ENCODE measurements at regions of chr3 and their contacts with region 1.

Region 1: DNA sequence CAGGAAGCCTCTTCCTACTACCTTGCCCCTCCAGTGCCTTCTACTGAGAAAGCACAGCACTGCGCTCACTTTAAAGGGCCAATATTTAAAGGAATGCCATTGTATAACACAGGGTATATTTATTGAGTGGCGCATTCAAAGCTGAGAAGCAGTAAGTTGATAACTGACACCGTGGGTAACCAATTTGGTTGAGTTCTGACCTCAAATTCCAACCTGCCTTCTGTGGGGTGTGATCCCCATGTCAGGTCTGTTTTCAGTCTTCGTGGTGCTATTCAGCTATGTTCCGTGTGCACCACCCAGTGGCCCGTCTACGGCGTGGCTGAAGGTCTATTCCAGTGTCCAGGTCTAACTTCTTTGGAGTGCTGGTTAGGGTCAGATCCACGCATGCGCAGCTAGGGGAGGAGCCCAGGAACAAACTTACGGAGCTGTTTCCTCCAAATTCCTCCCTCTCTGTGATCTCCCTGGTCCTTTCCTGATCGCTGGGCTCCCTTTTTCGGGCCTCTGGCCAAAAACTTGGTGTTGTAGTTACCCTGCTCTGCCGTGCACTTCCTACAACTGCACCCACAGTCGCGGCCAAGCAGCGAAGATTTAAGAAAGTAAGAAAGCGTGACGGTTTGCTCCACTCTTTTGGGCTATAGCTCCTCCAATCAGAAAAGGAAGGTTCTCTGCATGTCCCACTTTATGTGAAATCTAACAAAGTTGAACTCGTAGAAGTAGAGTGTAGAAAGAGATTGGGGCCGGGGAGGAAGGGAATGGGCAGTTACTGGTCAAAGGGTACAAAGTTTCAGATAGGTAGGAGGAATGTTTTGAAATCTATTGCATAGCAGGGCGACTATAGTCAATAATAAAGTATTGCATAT is 7.7 kb downstream of the LRRC2 start:
- DNase-seq: peak; percentile 88
- ATAC-seq: peak; percentile 83

Region 2: DNA sequence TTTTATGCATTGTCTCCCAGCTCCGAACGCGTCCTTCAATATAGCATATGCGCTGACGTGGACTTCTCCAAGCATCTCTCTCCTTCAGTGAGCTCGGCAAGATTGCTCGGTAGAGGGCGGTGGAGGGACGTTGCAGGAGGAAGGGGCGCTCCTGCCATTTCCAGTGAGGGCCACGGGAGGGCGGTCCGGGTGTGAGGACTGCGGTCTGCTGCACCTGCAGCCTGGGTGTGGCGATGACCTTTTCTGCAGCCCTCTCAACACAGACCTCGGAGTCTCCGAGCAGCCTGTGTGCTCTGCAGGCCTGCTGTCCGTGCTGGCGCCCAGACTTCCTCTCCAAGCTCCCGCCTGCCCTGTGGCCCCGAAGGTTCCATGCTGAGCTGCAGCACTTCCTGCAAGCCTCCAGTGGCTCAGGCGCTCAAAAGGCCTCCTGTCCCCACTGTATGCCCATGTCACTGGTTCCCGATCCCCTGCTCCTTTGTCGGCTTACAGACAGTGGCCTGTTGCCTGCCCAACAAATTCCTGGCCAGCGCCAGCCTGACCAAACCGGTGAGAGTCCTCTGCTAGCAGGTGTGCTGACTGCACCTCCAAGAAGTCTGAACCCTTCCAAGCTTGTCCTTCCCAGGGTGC is 69.6 kb before region 1 on chr3:
- intact Hi-C with region 1: loop called (anchors 5 kb)
- DNase-seq: peak; percentile 94
- ATAC-seq: peak; percentile 91

Region 3: GRCh38 chr3:46524008-46524407 is 34.4 kb before region 1 on chr3:
- intact Hi-C with region 1: no loop called
- DNase-seq: no peak
- ATAC-seq: no peak

Region 4: GRCh38 chr3:46882377-46883053 is 324.1 kb after region 1 on chr3:
- intact Hi-C with region 1: no loop called
- DNase-seq: no peak
- ATAC-seq: peak; percentile 35

Measured in Right ventricle myocardium inferior (tissue), 1 donor.